ENCODE measurements at regions of chr22 and their contacts with region 1.

Region 1: DNA sequence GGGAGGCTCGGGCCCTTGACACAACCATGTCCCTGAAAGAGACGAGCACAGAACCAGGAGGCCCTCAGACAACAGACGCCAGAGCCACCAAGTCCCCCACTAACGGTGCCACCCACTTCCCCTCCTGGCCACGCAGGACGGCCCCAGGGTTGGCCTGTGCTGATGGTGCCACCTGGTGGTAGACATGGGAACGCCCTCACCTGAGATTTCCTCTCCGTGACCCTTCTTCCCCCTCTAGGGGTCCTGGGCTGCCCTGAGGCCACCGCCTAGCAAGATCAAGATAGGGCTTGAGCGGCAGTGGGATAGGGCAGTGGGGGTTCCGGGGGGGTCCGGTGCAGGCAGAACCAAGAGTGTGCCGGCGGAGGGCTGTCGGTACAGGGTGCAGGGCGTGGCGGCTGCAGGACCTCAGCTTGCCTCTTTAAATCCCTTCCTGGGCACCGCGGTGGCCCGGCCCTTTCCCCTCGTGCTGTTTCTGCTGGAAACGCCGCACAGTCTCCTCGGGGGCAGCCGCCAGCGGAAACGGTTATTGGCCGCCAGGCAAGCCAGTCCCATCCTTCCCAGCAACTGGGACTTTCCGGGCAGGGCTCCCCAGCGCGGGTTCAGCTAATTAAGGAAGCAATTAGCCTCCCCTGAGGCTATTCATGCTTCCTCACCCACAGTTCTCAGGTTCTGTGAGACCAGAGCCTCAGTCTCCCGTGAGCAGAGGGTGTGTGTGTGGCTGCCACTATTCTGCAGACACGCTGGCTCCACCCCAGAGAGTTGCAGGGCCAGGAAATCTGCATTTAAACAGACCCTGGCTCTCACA is 5.5 kb upstream of the NFAM1 start:
- DNase-seq: peak; percentile 67 to 82
- ATAC-seq: peak; percentile 85

Region 2: GRCh38 chr22:42090596-42091454 is 346.9 kb before region 1 on chr22 and contains the start of gene NDUFA6:
- intact Hi-C with region 1: loop called in 1 of 2 experiments (anchors 10 kb)
- DNase-seq: peak; percentile 98 to 99
- ATAC-seq: peak; percentile 90
- total RNA-seq, gene NDUFA6: 96.2 to 125 TPM

Region 3: GRCh38 chr22:42171946-42172719 is 265.6 kb before region 1 on chr22:
- intact Hi-C with region 1: loop called in 1 of 2 experiments (anchors 2 kb)
- DNase-seq: no peak
- ATAC-seq: peak; percentile 36

Region 4: GRCh38 chr22:42289671-42290541 is 147.8 kb before region 1 on chr22:
- intact Hi-C with region 1: no loop called
- DNase-seq: no peak
- ATAC-seq: no peak

Measured in left colon (tissue), 2 donors.